Naive thymus-derived CD4-positive, alpha-beta T cell (primary cell): ENCODE measurements at regions of chr9 and their contacts with region 1.

Region 1: DNA sequence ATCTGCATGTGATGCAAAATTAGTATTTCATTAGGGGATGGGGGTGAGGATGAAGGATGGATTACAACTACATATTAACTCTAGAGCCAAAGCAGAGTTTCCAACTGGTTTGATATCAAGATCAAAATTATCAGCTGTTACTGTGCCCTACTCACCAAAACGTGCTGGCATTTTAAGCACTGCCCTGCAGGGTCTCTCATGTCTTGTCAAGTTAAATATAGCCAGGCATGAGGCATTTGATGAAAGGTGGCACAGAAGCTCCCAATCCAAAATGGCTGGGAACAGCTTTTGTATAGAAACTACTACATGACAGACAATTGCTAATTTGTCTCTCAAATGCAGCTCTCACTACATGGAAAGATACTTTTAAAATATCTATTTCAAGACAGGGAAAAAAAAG is 27.1 kb upstream of the CAAP1 start:
- DNase-seq: no peak
- ATAC-seq: no peak
- H3K4me3 ChIP-seq: no peak overlapping the region
- H3K4me3 Mint-ChIP-seq: no peak overlapping the region
- H3K27ac ChIP-seq: no peak overlapping the region
- H3K27ac Mint-ChIP-seq: no peak overlapping the region
- H3K4me1 ChIP-seq: no peaks in the 10 kb centered on the region
- H3K4me1 Mint-ChIP-seq: peaks cover 0 to 4% (median 0%) of the 10 kb centered on the region in 7 donors
- H3K27me3 ChIP-seq: no peaks in the 10 kb centered on the region
- H3K27me3 Mint-ChIP-seq: no peaks in the 10 kb centered on the region

Region 2: GRCh38 chr9:26271495-26272122 is 648.1 kb before region 1 on chr9:
- CTCF ChIA-PET with region 1: no interaction called
- POLR2A ChIA-PET with region 1: no interaction called
- intact Hi-C with region 1: no loop called
- DNase-seq: no peak
- ATAC-seq: no peak
- H3K4me3 ChIP-seq: no peak overlapping the region
- H3K4me3 Mint-ChIP-seq: no peak overlapping the region
- H3K27ac ChIP-seq: no peak overlapping the region
- H3K27ac Mint-ChIP-seq: no peak overlapping the region
- H3K4me1 ChIP-seq: no peaks in the 10 kb centered on the region
- H3K4me1 Mint-ChIP-seq: no peaks in the 10 kb centered on the region
- H3K27me3 ChIP-seq: no peaks in the 10 kb centered on the region
- H3K27me3 Mint-ChIP-seq: no peaks in the 10 kb centered on the region

Region 3: DNA sequence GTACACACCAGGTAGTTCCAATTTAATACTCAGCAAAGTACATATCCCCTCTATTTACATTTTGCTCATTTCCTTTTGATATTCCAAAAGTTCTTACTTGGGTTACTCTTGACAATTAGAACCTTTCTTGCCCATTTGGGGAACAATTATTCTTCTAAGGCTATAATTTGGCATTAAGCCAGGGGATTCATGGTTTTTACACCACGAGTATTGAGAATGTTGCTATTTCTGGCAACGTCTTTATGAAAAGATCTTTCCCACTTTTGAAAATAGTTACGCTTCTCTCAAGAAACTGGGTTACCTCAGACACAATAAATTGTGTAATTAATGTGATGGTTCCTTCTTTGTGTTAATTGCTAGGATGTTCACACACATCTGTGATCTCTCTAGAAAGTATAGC is 15.6 kb before region 1 on chr9:
- CTCF ChIA-PET with region 1: no interaction called
- POLR2A ChIA-PET with region 1: no interaction called
- intact Hi-C with region 1: loop called in 1 of 2 experiments (anchors 2 kb)
- DNase-seq: no peak
- ATAC-seq: no peak
- H3K4me3 ChIP-seq: no peak overlapping the region
- H3K4me3 Mint-ChIP-seq: no peak overlapping the region
- H3K27ac ChIP-seq: no peak overlapping the region
- H3K27ac Mint-ChIP-seq: no peak overlapping the region
- H3K4me1 ChIP-seq: no peaks in the 10 kb centered on the region
- H3K4me1 Mint-ChIP-seq: peaks cover 0 to 2% (median 0%) of the 10 kb centered on the region in 7 donors
- H3K27me3 ChIP-seq: no peaks in the 10 kb centered on the region
- H3K27me3 Mint-ChIP-seq: no peaks in the 10 kb centered on the region

Region 4: GRCh38 chr9:26939955-26940711 is 20.4 kb after region 1 on chr9:
- CTCF ChIA-PET with region 1: no interaction called
- POLR2A ChIA-PET with region 1: no interaction called
- intact Hi-C with region 1: loop called in 1 of 2 experiments (anchors 2 kb)
- DNase-seq: no peak
- ATAC-seq: no peak
- H3K4me3 ChIP-seq: no peak overlapping the region
- H3K4me3 Mint-ChIP-seq: peak overlapping the region in 8 of 10 donors; percentile 0 to 77 (median 44)
- H3K27ac ChIP-seq: no peak overlapping the region
- H3K27ac Mint-ChIP-seq: peak overlapping the region in 7 of 9 donors; percentile 8 to 67 (median 34)
- H3K4me1 ChIP-seq: peaks cover 18 to 32% of the 10 kb centered on the region in 2 donors
- H3K4me1 Mint-ChIP-seq: peaks cover 59 to 94% (median 85%) of the 10 kb centered on the region in 7 donors
- H3K27me3 ChIP-seq: no peaks in the 10 kb centered on the region
- H3K27me3 Mint-ChIP-seq: no peaks in the 10 kb centered on the region